Activated CD4-positive, alpha-beta T cell treated with anti-CD3 and anti-CD28 coated beads for 36 hours (primary cell): ENCODE measurements at regions of chr7 and their contacts with region 1.

Region 1: GRCh38 chr7:4775250-4775847 is at the start of gene AP5Z1:
- DNase-seq: peak; percentile 97
- ATAC-seq: peak; percentile 94
- H3K4me3 Mint-ChIP-seq: peak within 1 kb of the TSS; percentile 99
- H3K27ac Mint-ChIP-seq: peak within 1 kb of the TSS; percentile 94
- H3K4me1 Mint-ChIP-seq: peaks cover 43% of the 10 kb centered on the region
- H3K27me3 Mint-ChIP-seq: no peaks in the 10 kb centered on the region
- total RNA-seq, gene AP5Z1: 21.0 to 26.4 TPM

Region 2: GRCh38 chr7:4681886-4682620 is 93.3 kb before region 1 on chr7 and contains the start of gene FOXK1:
- CTCF ChIA-PET with region 1: no interaction called
- POLR2A ChIA-PET with region 1: no interaction called
- intact Hi-C with region 1: loop called in 1 of 2 experiments (anchors 1 kb)
- DNase-seq: peak; percentile 90
- ATAC-seq: peak; percentile 78
- H3K4me3 Mint-ChIP-seq: peak within 1 kb of the TSS; percentile 91
- H3K27ac Mint-ChIP-seq: peak within 1 kb of the TSS; percentile 98
- H3K4me1 Mint-ChIP-seq: peaks cover 30% of the 10 kb centered on the region
- H3K27me3 Mint-ChIP-seq: no peaks in the 10 kb centered on the region
- total RNA-seq, gene FOXK1: 30.0 to 33.9 TPM

Region 3: DNA sequence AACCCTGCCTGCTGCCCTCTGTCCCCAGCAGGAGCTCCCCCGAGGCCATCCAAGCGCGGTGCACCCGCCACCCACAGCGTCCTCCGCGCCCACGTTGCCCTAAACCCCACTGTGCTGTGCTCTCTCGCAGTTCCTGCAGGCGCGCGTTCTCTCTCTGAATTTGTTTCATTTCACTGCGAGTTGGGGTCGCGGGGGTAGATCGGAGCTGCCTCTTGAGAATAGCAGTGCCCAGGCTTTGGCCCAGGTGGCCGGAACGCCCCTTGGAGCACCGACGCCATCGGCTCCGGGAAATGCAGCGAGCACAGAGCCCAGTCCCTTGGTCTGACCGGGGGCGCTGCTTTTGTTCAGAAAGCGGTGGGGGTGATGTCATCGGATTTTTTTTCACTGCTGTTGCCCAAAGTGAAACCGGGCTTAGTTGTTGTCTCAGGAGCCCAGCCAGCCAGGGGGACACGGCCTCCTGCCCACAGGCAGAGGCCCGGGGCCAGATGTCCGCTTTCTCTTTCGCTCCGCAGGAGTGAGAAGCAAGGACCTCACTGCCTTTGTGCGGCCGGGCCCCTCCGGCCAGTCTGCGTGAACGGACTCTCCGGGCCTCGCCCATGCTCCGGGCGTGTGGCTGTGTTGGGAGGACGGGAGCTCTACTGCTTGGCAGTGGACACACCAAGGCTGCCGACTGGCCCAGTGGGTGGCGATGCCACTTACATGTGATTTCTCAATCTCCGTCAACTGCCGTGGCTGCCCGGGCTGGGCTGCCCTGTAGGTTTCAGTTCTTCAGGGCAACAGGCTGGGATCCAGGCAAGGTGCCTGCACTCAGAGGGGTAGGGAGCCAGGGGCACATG is 50.1 kb before region 1 on chr7:
- CTCF ChIA-PET with region 1: no interaction called
- POLR2A ChIA-PET with region 1: no interaction called
- intact Hi-C with region 1: loop called in 1 of 2 experiments (anchors 2 kb)
- DNase-seq: peak; percentile 76
- ATAC-seq: peak; percentile 84
- H3K4me3 Mint-ChIP-seq: peak overlapping the region; percentile 72
- H3K27ac Mint-ChIP-seq: peak overlapping the region; percentile 90
- H3K4me1 Mint-ChIP-seq: peaks cover 41% of the 10 kb centered on the region
- H3K27me3 Mint-ChIP-seq: no peaks in the 10 kb centered on the region

Region 4: DNA sequence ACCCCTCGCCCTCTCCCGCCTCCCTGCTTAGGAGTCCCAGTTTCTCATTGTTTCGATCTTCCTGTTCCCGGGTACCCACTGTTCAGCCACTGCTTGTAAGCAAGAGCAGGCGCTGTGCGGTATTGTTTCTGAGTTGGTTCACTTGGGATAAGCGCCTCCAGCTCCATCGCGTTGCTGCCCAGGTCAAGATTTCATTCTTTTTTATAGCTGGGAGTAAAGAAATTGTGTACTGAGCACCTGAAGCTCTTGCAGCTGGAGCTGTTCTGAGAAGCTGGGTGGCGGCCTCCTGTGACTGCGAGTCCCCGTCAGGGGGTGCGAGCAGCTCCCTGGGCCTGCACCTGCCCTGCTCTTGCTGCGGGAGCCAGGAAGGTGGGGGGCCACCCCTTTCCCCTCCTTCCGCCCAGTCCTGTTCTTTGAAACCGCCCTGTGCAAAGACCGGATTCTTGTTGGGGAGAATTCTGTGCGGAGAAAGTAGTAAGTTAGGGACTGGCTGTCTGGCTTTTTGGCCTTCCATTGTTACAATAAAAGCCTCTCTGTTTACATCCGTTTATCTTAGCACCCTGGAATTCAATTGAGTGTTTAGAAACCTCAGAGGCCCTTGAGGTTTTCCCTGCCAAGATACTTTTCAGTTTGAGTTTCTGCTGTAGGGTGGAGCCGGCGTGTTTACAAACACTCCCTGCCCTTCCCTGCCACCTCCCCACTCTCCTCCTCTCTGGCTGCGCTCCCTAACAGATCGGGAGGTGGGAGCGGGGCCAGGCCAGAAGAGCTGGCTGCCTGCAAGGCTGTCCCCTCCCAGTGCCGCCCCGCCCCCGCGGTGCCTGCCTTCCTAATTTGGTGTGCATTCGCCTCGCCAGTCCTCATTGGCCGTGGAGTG is 30.7 kb before region 1 on chr7:
- CTCF ChIA-PET with region 1: interaction called, 6 read pairs
- POLR2A ChIA-PET with region 1: interaction called, 9 read pairs
- intact Hi-C with region 1: loop called in 1 of 2 experiments (anchors 1 kb)
- DNase-seq: peak; percentile 87
- ATAC-seq: peak; percentile 79
- H3K4me3 Mint-ChIP-seq: peak overlapping the region; percentile 68
- H3K27ac Mint-ChIP-seq: peak overlapping the region; percentile 91
- H3K4me1 Mint-ChIP-seq: peaks cover 77% of the 10 kb centered on the region
- H3K27me3 Mint-ChIP-seq: no peaks in the 10 kb centered on the region

Region 5: GRCh38 chr7:4791738-4792536 is 16.6 kb after region 1 on chr7:
- CTCF ChIA-PET with region 1: interaction called, 19 read pairs
- POLR2A ChIA-PET with region 1: interaction called, 8 read pairs
- intact Hi-C with region 1: loop called in 1 of 2 experiments (anchors 1 kb)
- DNase-seq: peak; percentile 93
- ATAC-seq: peak; percentile 93
- H3K4me3 Mint-ChIP-seq: no peak overlapping the region
- H3K27ac Mint-ChIP-seq: no peak overlapping the region
- H3K4me1 Mint-ChIP-seq: peaks cover 6% of the 10 kb centered on the region
- H3K27me3 Mint-ChIP-seq: no peaks in the 10 kb centered on the region

Region 6: DNA sequence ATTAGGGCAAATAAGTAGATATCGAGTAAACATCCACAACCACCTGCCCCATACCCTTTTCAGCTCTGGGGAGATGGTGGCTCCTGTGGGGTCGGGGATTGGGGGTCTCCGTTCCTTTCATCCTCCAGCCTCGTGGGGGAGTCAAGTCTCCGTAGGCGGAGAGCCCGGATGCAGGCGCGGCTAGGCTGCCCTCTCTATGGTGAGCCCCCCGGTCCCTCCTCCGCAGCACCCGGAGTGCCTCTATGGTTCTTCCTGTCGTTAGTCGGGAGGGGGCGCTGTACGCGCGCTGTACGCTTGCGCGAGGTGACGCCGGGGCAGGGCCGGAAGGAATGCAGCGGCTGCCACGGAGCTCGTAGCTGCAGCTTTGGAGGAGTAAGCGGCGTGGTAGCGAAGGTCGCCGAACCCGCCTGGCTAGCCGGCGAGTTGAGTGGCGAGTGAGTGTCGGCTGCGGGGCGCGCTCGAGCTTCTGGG is 198.4 kb after region 1 on chr7:
- CTCF ChIA-PET with region 1: interaction called, 5 read pairs
- POLR2A ChIA-PET with region 1: no interaction called
- intact Hi-C with region 1: loop called in 1 of 2 experiments (anchors 1 kb)
- DNase-seq: peak; percentile 96
- ATAC-seq: peak; percentile 98
- H3K4me3 Mint-ChIP-seq: peak overlapping the region; percentile 97
- H3K27ac Mint-ChIP-seq: peak overlapping the region; percentile 92
- H3K4me1 Mint-ChIP-seq: peaks cover 31% of the 10 kb centered on the region
- H3K27me3 Mint-ChIP-seq: no peaks in the 10 kb centered on the region

Region 7: DNA sequence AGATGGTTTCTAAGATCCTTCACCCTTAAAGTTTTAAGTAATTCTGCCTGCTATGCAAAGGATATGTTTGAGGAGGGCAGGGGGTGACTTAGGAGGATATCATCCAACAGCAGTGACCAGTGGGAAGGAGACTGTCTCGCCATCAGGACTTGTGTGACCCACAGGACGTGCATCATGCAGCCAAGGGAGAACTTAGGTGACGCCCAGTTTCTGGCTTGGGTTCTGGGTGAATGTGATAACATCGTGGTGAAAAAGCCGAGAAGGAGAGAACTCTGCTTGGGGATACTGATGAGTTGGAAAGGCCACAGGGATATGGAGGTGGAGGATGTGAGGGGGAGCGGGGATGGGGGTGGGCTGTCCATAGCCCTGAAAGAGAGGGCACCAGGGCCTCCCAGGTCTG is 418.5 kb after region 1 on chr7:
- CTCF ChIA-PET with region 1: no interaction called
- POLR2A ChIA-PET with region 1: no interaction called
- intact Hi-C with region 1: loop called in 1 of 2 experiments (anchors 1 kb)
- DNase-seq: no peak
- ATAC-seq: no peak
- H3K4me3 Mint-ChIP-seq: no peak overlapping the region
- H3K27ac Mint-ChIP-seq: peak overlapping the region; percentile 6
- H3K4me1 Mint-ChIP-seq: peaks cover 21% of the 10 kb centered on the region
- H3K27me3 Mint-ChIP-seq: no peaks in the 10 kb centered on the region

Region 8: DNA sequence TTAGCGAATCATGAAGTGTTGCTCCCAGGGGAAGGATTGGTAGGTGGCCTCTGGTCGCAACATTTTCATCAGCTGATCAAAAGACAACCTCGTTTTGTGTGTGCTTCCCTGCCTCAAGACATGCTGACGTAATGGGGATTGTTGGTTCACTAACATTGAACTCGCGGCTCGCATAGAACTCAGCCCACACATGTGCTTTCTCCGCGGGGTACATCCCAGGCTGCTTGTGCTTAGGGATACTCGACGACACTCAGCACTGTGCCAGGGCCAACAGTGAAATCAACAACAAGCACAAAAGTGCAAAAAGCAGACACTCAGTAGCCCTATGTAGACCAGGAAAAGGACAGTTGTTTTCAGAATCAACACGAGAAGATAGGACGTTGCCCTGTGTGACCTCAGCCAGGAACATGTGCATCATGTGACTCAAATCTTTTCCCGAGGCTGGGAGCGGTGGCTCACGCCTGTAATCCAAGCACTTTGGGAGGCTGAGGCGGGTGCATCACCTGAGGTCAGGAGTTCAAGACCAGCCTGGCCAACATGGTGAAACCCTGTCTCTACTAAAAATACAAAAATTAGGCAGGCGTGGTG is 435.5 kb after region 1 on chr7:
- CTCF ChIA-PET with region 1: no interaction called
- POLR2A ChIA-PET with region 1: no interaction called
- intact Hi-C with region 1: no loop called
- DNase-seq: no peak
- ATAC-seq: no peak
- H3K4me3 Mint-ChIP-seq: no peak overlapping the region
- H3K27ac Mint-ChIP-seq: no peak overlapping the region
- H3K4me1 Mint-ChIP-seq: peaks cover 13% of the 10 kb centered on the region
- H3K27me3 Mint-ChIP-seq: no peaks in the 10 kb centered on the region